Endothelial cell of umbilical vein (primary cell): ENCODE measurements at regions of chr15 and their contacts with region 1.

Region 1: DNA sequence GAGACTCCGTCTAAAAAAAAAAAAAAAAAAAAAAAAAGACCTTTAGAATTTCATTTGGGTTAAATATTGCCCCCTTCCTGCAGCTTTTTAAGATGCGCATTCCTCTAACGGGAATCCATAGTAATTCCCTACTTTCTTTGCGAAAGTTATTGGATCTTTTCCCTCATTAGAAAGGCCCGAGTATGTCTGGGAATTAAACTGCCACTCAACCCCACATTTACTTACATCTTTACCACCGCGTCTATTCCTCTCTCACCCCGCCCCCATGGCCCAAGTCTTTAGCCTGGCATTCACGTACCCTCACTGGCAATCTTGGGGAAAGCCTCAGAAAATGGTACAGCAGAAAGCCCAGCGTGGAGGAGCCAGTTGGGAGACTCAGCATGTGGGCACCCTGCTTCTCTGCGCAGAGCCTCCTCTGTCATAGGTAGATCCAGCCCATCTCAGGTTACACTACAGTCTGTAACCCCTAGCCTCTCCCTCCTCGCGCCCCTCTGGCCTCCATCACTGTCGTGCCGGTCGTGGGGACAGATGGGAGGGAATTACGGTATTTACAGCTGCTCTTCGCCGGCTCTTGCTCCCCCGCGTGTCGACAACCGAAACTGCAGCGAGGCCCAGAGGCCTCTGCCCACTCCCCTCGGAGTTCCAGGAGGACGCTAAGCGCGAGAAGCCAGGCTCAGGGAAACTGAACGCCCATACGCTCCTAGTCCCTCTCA is 6.4 kb upstream of the ANKDD1A start:
- DNase-seq: peak; percentile 79
- H3K4me3 ChIP-seq: peak overlapping the region; percentile 21 to 48 (median 35)
- H3K27ac ChIP-seq: no peak overlapping the region
- H3K4me1 ChIP-seq: peaks cover 11% of the 10 kb centered on the region
- H3K27me3 ChIP-seq: no peaks in the 10 kb centered on the region
- CTCF ChIP-seq: peak; percentile 89 to 92
- POLR2A ChIP-seq: no peak

Region 2: GRCh38 chr15:64836023-64836536 is 69.2 kb before region 1 on chr15:
- CTCF ChIA-PET with region 1: interaction called, 9 read pairs
- POLR2A ChIA-PET with region 1: interaction called, 3 read pairs
- dilution Hi-C with region 1: no loop called
- intact Hi-C with region 1: loop called (anchors 1 kb)
- DNase-seq: no peak
- H3K4me3 ChIP-seq: no peak overlapping the region
- H3K27ac ChIP-seq: no peak overlapping the region
- H3K4me1 ChIP-seq: peaks cover 10% of the 10 kb centered on the region
- H3K27me3 ChIP-seq: no peaks in the 10 kb centered on the region
- CTCF ChIP-seq: no peak
- POLR2A ChIP-seq: no peak

Region 3: GRCh38 chr15:64856429-64857145 is 48.7 kb before region 1 on chr15:
- CTCF ChIA-PET with region 1: interaction called, 15 read pairs
- POLR2A ChIA-PET with region 1: no interaction called
- dilution Hi-C with region 1: no loop called
- intact Hi-C with region 1: no loop called
- DNase-seq: peak; percentile 57
- H3K4me3 ChIP-seq: no peak overlapping the region
- H3K27ac ChIP-seq: peak overlapping the region; percentile 38
- H3K4me1 ChIP-seq: peaks cover 29% of the 10 kb centered on the region
- H3K27me3 ChIP-seq: no peaks in the 10 kb centered on the region
- CTCF ChIP-seq: no peak
- POLR2A ChIP-seq: no peak

Region 4: GRCh38 chr15:64865998-64866520 is 39.2 kb before region 1 on chr15:
- CTCF ChIA-PET with region 1: interaction called, 13 read pairs
- POLR2A ChIA-PET with region 1: no interaction called
- dilution Hi-C with region 1: no loop called
- intact Hi-C with region 1: no loop called
- DNase-seq: no peak
- H3K4me3 ChIP-seq: no peak overlapping the region
- H3K27ac ChIP-seq: no peak overlapping the region
- H3K4me1 ChIP-seq: peaks cover 3% of the 10 kb centered on the region
- H3K27me3 ChIP-seq: no peaks in the 10 kb centered on the region
- CTCF ChIP-seq: no peak
- POLR2A ChIP-seq: no peak

Region 5: GRCh38 chr15:64893481-64894394 is 11.5 kb before region 1 on chr15:
- CTCF ChIA-PET with region 1: interaction called, 21 read pairs
- POLR2A ChIA-PET with region 1: no interaction called
- dilution Hi-C with region 1: no loop called
- intact Hi-C with region 1: no loop called
- DNase-seq: peak; percentile 98
- H3K4me3 ChIP-seq: peak overlapping the region in 2 of 3 experiments; percentile 20 to 24
- H3K27ac ChIP-seq: peak overlapping the region; percentile 72
- H3K4me1 ChIP-seq: peaks cover 44% of the 10 kb centered on the region
- H3K27me3 ChIP-seq: no peaks in the 10 kb centered on the region
- CTCF ChIP-seq: no peak
- POLR2A ChIP-seq: peak; percentile 69